PC-9 (cell line): ENCODE measurements at regions of chr14 and their contacts with region 1.

Region 1: GRCh38 chr14:51651388-51652167 is at the start of gene FRMD6:
- DNase-seq: peak; percentile 70 to 86
- H3K4me3 ChIP-seq: peak within 1 kb of the TSS; percentile 98
- H3K27ac ChIP-seq: peak within 1 kb of the TSS; percentile 88
- H3K4me1 ChIP-seq: peaks cover 51% of the 10 kb centered on the region
- H3K27me3 ChIP-seq: no peaks in the 10 kb centered on the region
- CTCF ChIP-seq: peak; percentile 79
- total RNA-seq, gene FRMD6: 42.9 and 47.9 TPM in 2 replicates

Region 2: GRCh38 chr14:51395361-51395849 is 256.2 kb before region 1 on chr14:
- CTCF ChIA-PET with region 1: interaction called, 7 read pairs
- POLR2A ChIA-PET with region 1: no interaction called
- intact Hi-C with region 1: loop called (anchors 2 kb)
- DNase-seq: peak in 1 of 2 experiments; percentile 33
- H3K4me3 ChIP-seq: no peak overlapping the region
- H3K27ac ChIP-seq: peak overlapping the region; percentile 95
- H3K4me1 ChIP-seq: peaks cover 63% of the 10 kb centered on the region
- H3K27me3 ChIP-seq: no peaks in the 10 kb centered on the region
- CTCF ChIP-seq: no peak

Region 3: DNA sequence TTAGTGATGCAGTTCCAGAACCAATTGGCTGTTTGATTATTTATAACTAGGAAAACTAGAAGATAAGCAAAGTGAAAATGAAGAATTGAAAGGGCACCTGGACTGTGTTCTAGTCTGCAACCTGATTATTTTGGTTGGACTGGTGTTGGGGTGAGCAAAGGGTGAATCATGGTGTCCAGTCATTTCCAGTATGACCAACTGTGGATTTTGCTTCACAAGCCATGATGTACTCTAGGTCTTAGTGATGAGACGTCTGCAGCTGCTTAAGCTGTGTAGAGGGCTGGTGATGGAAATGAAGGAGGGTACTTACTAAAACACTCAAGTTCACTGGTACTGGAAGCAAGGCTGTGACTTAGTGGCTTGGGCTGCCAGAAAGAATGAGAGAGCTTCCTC is 193.0 kb before region 1 on chr14:
- CTCF ChIA-PET with region 1: no interaction called
- POLR2A ChIA-PET with region 1: no interaction called
- intact Hi-C with region 1: loop called (anchors 5 kb)
- DNase-seq: no peak
- H3K4me3 ChIP-seq: no peak overlapping the region
- H3K27ac ChIP-seq: no peak overlapping the region
- H3K4me1 ChIP-seq: peaks cover 10% of the 10 kb centered on the region
- H3K27me3 ChIP-seq: no peaks in the 10 kb centered on the region
- CTCF ChIP-seq: no peak

Region 4: GRCh38 chr14:51534625-51535024 is 117.0 kb before region 1 on chr14:
- CTCF ChIA-PET with region 1: no interaction called
- POLR2A ChIA-PET with region 1: interaction called, 26 read pairs
- intact Hi-C with region 1: loop called (anchors 1 kb)
- DNase-seq: peak; percentile 87 to 98
- H3K4me3 ChIP-seq: no peak overlapping the region
- H3K27ac ChIP-seq: peak overlapping the region; percentile 99
- H3K4me1 ChIP-seq: peaks cover 54% of the 10 kb centered on the region
- H3K27me3 ChIP-seq: no peaks in the 10 kb centered on the region
- CTCF ChIP-seq: no peak

Region 5: GRCh38 chr14:51581017-51581881 is 70.3 kb before region 1 on chr14:
- CTCF ChIA-PET with region 1: interaction called, 10 read pairs
- POLR2A ChIA-PET with region 1: no interaction called
- intact Hi-C with region 1: no loop called
- DNase-seq: peak in 1 of 2 experiments; percentile 69
- H3K4me3 ChIP-seq: no peak overlapping the region
- H3K27ac ChIP-seq: peak overlapping the region; percentile 45
- H3K4me1 ChIP-seq: peaks cover 18% of the 10 kb centered on the region
- H3K27me3 ChIP-seq: no peaks in the 10 kb centered on the region
- CTCF ChIP-seq: no peak

Region 6: DNA sequence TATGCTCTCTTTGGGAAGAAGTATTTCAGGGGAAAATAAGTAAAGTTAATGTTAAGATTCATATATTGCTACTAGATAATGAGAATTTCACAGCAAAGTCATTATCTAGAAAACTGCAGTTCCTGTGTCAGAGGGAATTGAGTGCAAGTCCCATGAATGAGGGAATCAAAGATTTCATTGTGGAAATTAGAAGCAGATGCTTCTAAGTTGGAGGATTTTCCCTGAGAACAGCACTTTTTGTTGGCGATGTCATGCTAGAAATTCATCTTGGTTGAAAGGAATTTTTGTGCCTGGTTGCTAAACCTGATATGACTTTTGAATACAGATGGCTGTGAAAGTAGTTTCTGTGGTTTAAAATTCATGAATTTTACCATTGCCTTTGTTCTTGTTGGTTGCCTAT is 25.7 kb after region 1 on chr14:
- CTCF ChIA-PET with region 1: no interaction called
- POLR2A ChIA-PET with region 1: interaction called, 13 read pairs
- intact Hi-C with region 1: no loop called
- DNase-seq: no peak
- H3K4me3 ChIP-seq: no peak overlapping the region
- H3K27ac ChIP-seq: no peak overlapping the region
- H3K4me1 ChIP-seq: peaks cover 6% of the 10 kb centered on the region; the same call in 1 of the 2 replicates
- H3K27me3 ChIP-seq: no peaks in the 10 kb centered on the region
- CTCF ChIP-seq: no peak

Region 7: DNA sequence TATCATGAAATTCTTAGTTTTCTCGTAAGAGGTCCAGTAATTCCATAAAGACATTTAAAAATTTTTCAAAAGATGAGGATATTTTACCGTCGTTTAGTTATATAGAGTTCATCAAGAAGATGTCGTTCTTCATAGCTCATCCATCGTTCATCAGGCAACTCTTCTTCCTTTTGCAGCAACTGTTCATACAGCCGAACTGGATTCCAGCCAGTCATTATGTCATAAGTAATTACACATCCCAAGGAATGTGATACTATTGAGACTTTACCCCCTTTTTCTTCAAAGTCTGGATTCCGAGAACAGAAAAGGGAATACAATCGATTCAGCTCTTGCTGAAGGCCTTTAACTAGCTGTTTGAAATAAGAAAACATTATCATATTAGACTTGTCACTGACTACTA is 1411.3 kb after region 1 on chr14:
- CTCF ChIA-PET with region 1: no interaction called
- POLR2A ChIA-PET with region 1: interaction called, 13 read pairs
- intact Hi-C with region 1: no loop called
- DNase-seq: no peak
- H3K4me3 ChIP-seq: no peak overlapping the region
- H3K27ac ChIP-seq: no peak overlapping the region
- H3K4me1 ChIP-seq: no peaks in the 10 kb centered on the region
- H3K27me3 ChIP-seq: no peaks in the 10 kb centered on the region
- CTCF ChIP-seq: no peak